Heart left ventricle (tissue), 16 donors: ENCODE measurements at regions of chr1 and their contacts with region 1.

Region 1: DNA sequence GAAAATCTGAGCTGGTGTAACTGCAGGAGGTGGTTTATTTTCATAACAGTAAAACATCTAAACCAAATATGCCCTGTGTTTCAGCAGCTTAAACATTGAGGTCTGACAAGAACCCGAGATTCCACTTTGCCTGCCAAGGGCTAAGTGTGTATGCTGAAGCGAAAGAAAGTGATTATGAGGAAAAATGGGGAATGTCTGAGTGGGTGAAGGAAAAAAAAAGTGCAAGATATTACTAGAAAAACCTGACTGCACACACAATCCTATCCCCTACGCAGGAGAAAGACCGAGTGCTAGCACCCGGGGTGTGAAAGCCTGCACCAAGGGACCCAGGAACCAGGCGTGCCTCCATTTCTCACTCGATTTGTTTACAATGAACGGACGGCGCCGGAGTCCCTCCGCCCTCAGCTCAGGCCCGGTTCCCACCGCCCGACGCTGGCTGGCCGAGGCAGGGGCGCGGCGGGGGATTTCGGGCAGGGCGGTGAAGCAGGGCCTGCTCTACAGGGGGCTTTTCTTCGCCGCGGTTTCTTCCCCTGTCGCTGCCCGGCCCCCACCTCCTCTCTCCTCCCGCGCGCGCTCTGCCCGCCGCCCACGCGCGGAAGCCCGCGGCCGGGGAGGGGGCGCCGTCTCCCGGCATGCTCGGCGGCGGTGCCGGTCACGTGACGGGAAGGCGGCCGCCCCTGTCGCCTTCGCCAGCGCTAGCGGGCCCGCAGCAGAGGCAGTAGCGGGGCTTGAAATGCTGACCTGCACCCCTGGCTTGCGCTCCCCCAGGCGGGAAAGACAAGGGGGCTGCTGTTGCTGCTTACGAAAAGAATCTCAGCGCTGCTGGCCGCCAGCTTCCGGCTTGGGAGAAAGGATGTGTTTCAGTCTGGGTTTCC is 35.9 kb downstream of the ITPKB start:
- DNase-seq: peak; percentile 85 to 88 (median 87)
- ATAC-seq: peak; percentile 68 to 94 (median 89)
- H3K4me3 ChIP-seq: peak overlapping the region; percentile 54 to 84 (median 69)
- H3K27ac ChIP-seq: peak overlapping the region in 11 of 12 donors; percentile 94 to 99 (median 97)
- H3K4me1 ChIP-seq: peaks cover 4 to 62% (median 41%) of the 10 kb centered on the region in 12 donors
- H3K27me3 ChIP-seq: no peaks in the 10 kb centered on the region
- CTCF ChIP-seq: peak in 1 of 12 donors; percentile 6
- POLR2A ChIP-seq: peak in 1 of 2 donors; percentile 78

Region 2: DNA sequence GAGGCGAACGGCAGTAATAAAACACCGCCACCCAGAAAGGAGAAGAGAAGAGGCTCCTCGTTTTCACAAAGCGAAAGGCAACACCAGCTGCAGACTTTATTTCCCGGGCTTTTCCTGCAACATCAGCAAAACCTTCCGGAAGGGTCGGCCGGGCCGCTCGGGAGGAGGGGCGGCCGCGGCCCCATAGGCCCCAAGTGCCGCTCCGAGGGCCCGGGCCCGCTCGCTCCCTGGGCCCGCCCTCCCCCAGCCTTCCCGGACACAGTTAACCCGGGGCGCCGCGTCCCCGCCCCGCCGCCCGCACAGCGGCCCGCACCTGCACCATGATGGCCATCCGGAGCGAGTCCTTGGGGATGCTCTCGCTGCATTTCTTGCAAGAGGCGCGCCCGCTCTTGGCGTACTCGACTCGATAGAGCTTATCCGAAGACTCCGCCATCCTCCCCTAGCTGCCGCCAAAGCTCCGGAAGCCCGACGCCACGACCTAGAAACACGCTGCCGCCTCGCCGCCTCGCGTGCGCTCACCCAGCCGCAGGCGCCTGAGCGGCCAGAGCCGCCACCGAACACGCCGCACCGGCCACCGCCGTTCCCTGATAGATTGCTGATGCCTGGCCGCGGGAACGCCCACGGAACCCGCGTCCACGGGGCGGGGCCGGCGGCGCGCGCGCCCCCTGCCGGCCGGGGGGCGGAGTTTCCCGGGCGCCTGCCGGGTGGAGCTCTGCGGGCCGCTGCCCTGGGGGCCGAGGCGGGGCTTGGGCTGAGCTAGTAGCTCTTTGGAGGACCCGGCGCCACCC is 295.5 kb before region 1 on chr1 and contains the start of gene PARP1:
- intact Hi-C with region 1: loop called in 1 of 10 experiments (anchors 10 kb)
- DNase-seq: peak; percentile 88 to 94 (median 93)
- ATAC-seq: peak; percentile 84 to 94 (median 90)
- H3K4me3 ChIP-seq: peak within 1 kb of the TSS; percentile 62 to 98 (median 88)
- H3K27ac ChIP-seq: peak within 1 kb of the TSS; percentile 44 to 93 (median 86)
- H3K4me1 ChIP-seq: peaks cover 7 to 46% (median 41%) of the 10 kb centered on the region in 12 donors
- H3K27me3 ChIP-seq: no peaks in the 10 kb centered on the region
- CTCF ChIP-seq: peak; percentile 35 to 98 (median 90)
- POLR2A ChIP-seq: peak; percentile 34 to 81
- total RNA-seq, gene PARP1: 98.8 to 168 (median 111) TPM

Region 3: DNA sequence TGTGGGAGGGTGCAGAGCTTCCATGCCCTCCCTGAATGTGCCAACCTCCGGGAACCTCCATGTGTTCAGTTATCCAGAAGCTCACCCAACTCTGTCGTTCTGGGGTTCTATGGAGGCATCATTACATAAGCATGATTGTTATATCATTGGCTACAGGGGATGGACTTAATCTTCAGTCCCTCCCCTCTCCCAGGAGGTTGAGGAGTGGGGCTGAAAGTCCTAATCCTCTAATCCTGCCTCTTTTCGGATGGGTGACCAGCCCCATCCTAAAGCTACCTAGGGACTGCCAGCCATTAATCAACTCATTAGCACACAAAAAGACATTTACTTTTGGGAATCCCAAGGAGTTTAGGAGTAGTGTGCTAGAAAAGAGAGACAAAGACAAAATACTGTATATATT is 135.3 kb after region 1 on chr1:
- intact Hi-C with region 1: no loop called
- DNase-seq: no peak
- ATAC-seq: no peak
- H3K4me3 ChIP-seq: no peak overlapping the region
- H3K27ac ChIP-seq: no peak overlapping the region
- H3K4me1 ChIP-seq: no peaks in the 10 kb centered on the region
- H3K27me3 ChIP-seq: no peaks in the 10 kb centered on the region
- CTCF ChIP-seq: no peak
- POLR2A ChIP-seq: no peak